ENCODE measurements at regions of chr2 and their contacts with region 1.

Region 1: GRCh38 chr2:173027181-173028128 is 48.2 kb upstream of the MAP3K20 start:
- DNase-seq: no peak
- ATAC-seq: peak; percentile 67
- H3K4me3 Mint-ChIP-seq: no peak overlapping the region
- H3K27ac Mint-ChIP-seq: no peak overlapping the region
- H3K4me1 Mint-ChIP-seq: peaks cover 4% of the 10 kb centered on the region
- H3K27me3 Mint-ChIP-seq: peaks cover 8% of the 10 kb centered on the region
- CTCF ChIP-seq: peak; percentile 47

Region 2: DNA sequence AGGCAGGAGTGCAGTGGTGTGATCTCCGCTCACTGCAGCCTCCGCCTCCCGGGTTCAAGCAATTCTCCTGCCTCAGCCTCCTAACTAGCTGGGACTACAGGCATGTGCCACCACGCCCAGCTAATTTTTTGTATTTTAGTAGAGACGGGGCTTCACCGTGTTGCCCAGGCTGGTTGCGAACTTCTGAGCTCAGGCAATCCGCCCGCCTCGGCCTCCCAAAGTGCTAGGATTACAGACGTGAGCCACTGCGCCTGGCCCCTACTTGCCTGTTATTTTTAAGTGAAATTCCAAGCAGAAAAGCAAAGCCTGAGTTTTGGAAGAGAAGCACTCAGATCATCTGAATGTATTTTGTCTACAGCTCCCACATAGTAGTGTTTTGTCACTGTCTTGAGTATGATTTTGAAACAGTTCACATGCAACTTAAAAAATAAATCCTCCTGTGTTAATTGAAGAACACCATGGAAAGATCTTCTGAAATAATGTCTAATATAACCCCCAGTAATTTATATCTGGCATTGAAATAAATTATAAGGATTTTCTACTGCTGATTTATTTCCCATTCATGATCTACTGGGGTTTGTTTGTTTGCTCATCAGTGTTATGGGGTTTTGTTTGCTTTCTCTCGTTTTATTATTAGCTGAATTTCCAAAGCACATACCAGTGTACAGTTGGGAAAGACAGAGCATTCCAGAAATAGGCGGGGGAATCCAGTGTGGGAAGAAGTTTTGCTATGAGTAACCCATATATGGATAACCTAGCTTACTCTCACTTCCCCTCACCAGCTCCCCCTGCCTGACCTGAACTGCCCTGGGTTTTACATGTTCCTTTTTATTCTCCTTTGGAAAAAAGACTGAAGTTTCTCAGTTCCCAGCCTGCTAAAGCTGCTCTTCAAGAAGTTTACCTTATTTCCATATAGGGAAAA is 31.9 kb before region 1 on chr2:
- CTCF ChIA-PET with region 1: no interaction called
- POLR2A ChIA-PET with region 1: no interaction called
- intact Hi-C with region 1: no loop called
- DNase-seq: no peak
- ATAC-seq: no peak
- H3K4me3 Mint-ChIP-seq: no peak overlapping the region
- H3K27ac Mint-ChIP-seq: no peak overlapping the region
- H3K4me1 Mint-ChIP-seq: no peaks in the 10 kb centered on the region
- H3K27me3 Mint-ChIP-seq: peaks cover 7% of the 10 kb centered on the region
- CTCF ChIP-seq: no peak

Region 3: DNA sequence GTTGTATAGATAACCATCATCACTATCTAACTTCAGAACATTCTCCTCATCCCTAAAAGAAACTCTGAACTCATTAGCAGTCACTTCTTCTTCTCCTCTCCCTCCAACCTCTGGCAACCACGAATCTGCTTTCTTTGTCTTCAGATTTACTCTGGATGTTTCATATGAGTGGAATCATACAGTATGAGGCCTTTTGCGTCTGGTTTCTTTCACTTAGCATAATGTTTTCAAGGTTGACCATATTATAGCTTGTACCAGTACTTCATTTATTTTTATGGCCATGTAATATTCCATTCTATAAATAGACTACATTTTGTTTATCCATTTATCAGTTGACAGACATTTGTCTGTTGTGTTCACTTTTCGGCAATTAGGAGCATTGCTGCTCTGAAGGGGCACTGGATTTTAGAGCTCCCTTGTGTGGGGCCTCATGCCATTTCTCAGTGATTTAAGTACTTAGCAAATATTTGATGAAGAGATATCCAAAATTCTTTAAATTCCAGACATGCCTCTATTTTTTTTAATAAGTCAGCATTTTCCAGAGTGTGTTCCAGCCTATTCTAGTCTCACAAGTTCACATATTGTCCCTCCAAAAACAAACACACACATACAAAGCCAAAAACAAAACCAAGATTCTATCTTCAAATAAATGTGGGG is 25.7 kb after region 1 on chr2:
- CTCF ChIA-PET with region 1: no interaction called
- POLR2A ChIA-PET with region 1: no interaction called
- intact Hi-C with region 1: no loop called
- DNase-seq: no peak
- ATAC-seq: no peak
- H3K4me3 Mint-ChIP-seq: no peak overlapping the region
- H3K27ac Mint-ChIP-seq: no peak overlapping the region
- H3K4me1 Mint-ChIP-seq: no peaks in the 10 kb centered on the region
- H3K27me3 Mint-ChIP-seq: peaks cover 7% of the 10 kb centered on the region
- CTCF ChIP-seq: no peak

Region 4: DNA sequence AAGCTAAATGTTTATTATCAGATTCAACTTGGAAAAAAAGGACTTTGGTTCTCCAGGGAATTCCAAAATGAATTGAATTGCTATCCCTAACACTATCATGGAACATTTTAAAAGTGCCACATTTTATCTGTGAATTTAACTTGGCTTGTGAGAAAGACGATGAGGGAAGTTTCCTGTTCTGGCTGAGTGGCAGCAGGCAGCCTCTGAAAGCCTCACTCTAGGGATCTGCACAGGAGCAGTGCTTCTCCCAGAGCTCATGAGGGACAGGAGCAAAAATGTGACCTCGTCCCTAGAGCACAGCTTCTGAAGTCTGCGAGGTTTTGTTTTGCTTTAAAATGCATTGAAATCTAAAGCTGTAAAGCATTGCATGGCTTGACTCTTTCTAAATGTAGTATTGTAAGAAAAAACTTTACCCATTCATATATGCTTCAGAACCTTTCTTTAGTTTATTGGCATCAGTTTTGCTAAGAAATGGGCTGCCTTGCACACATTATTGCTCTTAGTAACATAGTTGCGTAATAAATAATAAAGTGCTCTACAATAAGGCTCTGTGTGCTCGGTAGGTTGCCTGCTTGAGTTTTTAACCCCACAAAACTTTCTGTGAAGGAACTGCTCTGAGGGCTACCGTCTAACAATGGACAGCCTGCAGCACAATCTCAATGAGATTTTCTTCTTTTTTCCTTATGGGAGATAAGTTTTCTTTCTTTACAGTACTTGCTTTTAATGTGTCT is 191.0 kb after region 1 on chr2:
- CTCF ChIA-PET with region 1: interaction called, 10 read pairs
- POLR2A ChIA-PET with region 1: interaction called, 3 read pairs
- intact Hi-C with region 1: no loop called
- DNase-seq: no peak
- ATAC-seq: no peak
- H3K4me3 Mint-ChIP-seq: no peak overlapping the region
- H3K27ac Mint-ChIP-seq: no peak overlapping the region
- H3K4me1 Mint-ChIP-seq: no peaks in the 10 kb centered on the region
- H3K27me3 Mint-ChIP-seq: no peaks in the 10 kb centered on the region
- CTCF ChIP-seq: no peak

Region 5: DNA sequence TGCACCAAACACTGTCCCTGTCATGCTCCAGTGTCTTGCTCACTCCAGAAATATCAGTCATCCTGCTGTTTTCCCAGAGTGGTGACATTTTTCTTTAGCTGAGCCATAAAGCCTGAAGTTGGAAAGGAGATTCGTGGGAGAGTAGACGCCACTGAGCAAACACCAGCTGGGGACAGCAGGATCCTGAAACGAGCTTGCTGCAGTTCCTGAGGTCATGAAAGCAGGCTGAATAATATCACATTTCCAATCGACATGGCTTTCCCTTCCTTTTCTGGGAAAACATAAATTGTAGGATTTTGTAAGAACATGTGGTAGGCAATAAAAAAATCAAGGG is 603.6 kb after region 1 on chr2:
- CTCF ChIA-PET with region 1: no interaction called
- POLR2A ChIA-PET with region 1: no interaction called
- intact Hi-C with region 1: no loop called
- DNase-seq: no peak
- ATAC-seq: no peak
- H3K4me3 Mint-ChIP-seq: no peak overlapping the region
- H3K27ac Mint-ChIP-seq: no peak overlapping the region
- H3K4me1 Mint-ChIP-seq: no peaks in the 10 kb centered on the region
- H3K27me3 Mint-ChIP-seq: peaks cover 26% of the 10 kb centered on the region
- CTCF ChIP-seq: no peak

Measured in activated B cell treated with CpG ODN at 0.5 μM for 24 hours (primary cell).